SK-N-SH (cell line): ENCODE measurements at regions of chr22 and their contacts with region 1.

Region 1: DNA sequence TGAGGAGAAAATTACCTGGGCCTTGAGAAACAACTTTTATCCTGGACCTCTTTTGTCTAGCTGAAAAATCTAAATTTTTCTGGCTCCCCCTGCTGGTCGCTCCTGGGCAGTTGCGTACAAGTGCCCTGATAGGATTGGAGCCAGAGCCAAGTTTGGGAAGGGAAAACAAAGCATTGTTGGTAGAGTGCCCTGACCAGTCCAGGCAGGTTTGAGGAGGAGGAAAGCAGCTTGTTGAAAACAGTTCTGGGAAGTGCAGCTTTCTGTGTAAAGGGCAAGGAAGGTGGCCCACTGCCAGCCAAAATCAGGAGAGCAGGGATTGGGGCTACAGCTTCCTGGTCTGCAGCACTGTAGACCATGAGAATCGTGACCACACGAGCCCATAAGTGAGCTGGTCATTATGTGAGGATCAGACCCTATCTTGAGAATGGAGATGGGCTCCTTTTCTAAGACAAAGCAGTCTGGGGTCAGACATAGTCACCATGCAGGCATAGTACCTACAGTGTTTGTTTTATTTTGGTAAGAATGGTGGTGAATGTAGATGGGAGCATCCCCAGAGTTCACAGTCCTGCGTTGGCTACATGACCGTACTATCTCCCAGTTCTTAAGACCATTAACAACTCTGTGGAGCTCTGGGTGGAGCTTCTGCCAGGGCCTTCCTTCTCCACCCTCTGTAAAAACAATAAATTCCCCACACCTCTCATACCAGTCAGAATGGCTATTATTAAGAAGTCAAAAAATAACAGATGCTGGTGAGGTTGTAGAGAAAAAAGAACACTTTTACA is 21.3 kb upstream of the PIK3IP1 start:
- DNase-seq: peak; percentile 72
- H3K4me3 ChIP-seq: no peak overlapping the region
- H3K27ac ChIP-seq: 0 out of 4 replicates have a peak overlapping the region, but pooled peaks of 1 of the 2 experiments have one; percentile 8
- H3K4me1 ChIP-seq: peaks cover 0 to 2% of the 10 kb centered on the region in 2 experiments; a peak in 1 of 4 replicates
- H3K27me3 ChIP-seq: no peaks in the 10 kb centered on the region
- CTCF ChIP-seq: peak; percentile 93
- EP300 ChIP-seq: no peak
- RAD21 ChIP-seq: peak; percentile 66

Region 2: GRCh38 chr22:31127181-31127772 is 186.3 kb before region 1 on chr22:
- CTCF ChIA-PET with region 1: no interaction called
- POLR2A ChIA-PET with region 1: no interaction called
- DNase-seq: no peak
- H3K4me3 ChIP-seq: no peak overlapping the region
- H3K27ac ChIP-seq: no peak overlapping the region
- H3K4me1 ChIP-seq: peaks cover 0 to 39% of the 10 kb centered on the region in 2 experiments; a peak in 1 of 4 replicates
- H3K27me3 ChIP-seq: no peaks in the 10 kb centered on the region
- CTCF ChIP-seq: no peak
- EP300 ChIP-seq: no peak
- RAD21 ChIP-seq: no peak

Region 3: DNA sequence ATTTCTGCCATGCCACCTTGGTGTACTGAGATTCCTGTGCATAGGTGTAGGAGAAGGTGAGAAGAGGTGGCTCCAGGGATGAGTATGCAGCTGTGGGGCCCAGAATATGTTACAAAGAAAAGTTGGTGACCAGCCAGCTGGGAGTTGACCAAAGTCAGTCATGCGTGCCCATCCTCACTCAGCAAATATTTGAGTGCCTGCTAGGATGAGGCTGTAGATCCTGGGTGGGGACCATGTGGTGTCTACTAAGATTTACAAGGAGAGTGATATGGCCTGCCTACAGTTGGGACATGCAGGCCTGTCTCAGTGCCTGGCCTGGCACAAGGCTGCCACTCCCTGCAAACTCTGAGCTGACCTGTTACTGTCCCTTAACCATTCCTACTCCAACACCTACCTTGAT is 134.2 kb before region 1 on chr22:
- CTCF ChIA-PET with region 1: no interaction called
- POLR2A ChIA-PET with region 1: no interaction called
- DNase-seq: no peak
- H3K4me3 ChIP-seq: no peak overlapping the region
- H3K27ac ChIP-seq: no peak overlapping the region
- H3K4me1 ChIP-seq: peaks cover 0 to 17% of the 10 kb centered on the region in 2 experiments; a peak in 1 of 4 replicates
- H3K27me3 ChIP-seq: no peaks in the 10 kb centered on the region
- CTCF ChIP-seq: no peak
- EP300 ChIP-seq: no peak
- RAD21 ChIP-seq: no peak

Region 4: GRCh38 chr22:31278622-31279326 is 34.8 kb before region 1 on chr22:
- CTCF ChIA-PET with region 1: interaction called, 14 read pairs
- POLR2A ChIA-PET with region 1: no interaction called
- DNase-seq: no peak
- H3K4me3 ChIP-seq: no peak overlapping the region
- H3K27ac ChIP-seq: no peak overlapping the region
- H3K4me1 ChIP-seq: no peaks in the 10 kb centered on the region; a peak in 1 of 4 replicates
- H3K27me3 ChIP-seq: no peaks in the 10 kb centered on the region
- CTCF ChIP-seq: no peak
- EP300 ChIP-seq: no peak
- RAD21 ChIP-seq: no peak

Region 5: GRCh38 chr22:31290494-31291471 is 22.8 kb before region 1 on chr22:
- CTCF ChIA-PET with region 1: interaction called, 36 read pairs
- POLR2A ChIA-PET with region 1: no interaction called
- DNase-seq: peak; percentile 96
- H3K4me3 ChIP-seq: peak overlapping the region; percentile 69 to 74
- H3K27ac ChIP-seq: peak overlapping the region; percentile 51 to 96
- H3K4me1 ChIP-seq: peaks cover 7 to 21% of the 10 kb centered on the region in 2 experiments; a peak in 3 of 4 replicates
- H3K27me3 ChIP-seq: no peaks in the 10 kb centered on the region
- CTCF ChIP-seq: no peak
- EP300 ChIP-seq: peak; percentile 9 to 73; a peak in 3 of 4 replicates
- RAD21 ChIP-seq: no peak

Region 6: DNA sequence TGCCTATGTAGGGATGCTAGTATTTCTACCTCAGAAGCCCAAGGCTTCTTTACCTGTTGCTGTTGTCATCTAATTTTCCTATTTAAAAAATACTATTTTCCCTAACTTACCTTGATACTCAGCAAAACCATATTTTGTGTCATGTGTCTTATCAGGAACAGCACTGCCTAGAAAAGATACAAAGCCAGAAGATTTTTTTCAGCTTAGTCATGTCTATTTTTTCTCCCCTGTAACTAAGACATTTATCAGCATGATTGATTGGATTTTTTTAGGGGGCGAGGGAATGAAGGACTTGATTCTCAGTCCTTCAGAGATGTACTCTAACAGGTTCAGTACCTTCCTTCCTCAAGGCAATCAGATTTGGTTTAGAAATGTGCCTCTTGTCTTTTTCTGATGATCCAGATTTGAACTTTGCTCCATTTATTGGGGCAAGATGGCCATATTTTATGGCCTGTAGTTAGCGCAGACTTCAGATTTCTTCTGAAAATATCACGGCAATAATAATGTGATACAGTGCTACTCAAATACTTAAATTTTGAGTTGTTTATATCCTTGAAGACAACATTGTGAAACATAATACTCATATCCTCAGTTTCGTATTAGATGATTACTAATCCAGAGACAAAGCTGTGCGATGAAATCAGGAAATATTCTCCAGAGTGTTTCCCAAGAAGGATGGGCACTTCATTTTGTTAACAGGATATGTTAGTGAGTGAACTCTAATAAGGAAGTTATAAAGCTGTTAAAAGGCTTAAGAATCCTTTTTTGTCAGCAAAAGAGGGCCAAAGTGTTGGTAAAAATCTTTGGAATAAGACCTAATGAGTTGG is 17.5 kb before region 1 on chr22:
- CTCF ChIA-PET with region 1: interaction called, 58 read pairs
- POLR2A ChIA-PET with region 1: no interaction called
- DNase-seq: no peak
- H3K4me3 ChIP-seq: no peak overlapping the region
- H3K27ac ChIP-seq: peak overlapping the region; percentile 23 to 45; a peak in 3 of 4 replicates
- H3K4me1 ChIP-seq: peaks cover 6 to 16% of the 10 kb centered on the region in 2 experiments; a peak in 3 of 4 replicates
- H3K27me3 ChIP-seq: no peaks in the 10 kb centered on the region
- CTCF ChIP-seq: no peak
- EP300 ChIP-seq: no peak
- RAD21 ChIP-seq: no peak

Region 7: GRCh38 chr22:31302006-31302405 is 11.6 kb before region 1 on chr22:
- CTCF ChIA-PET with region 1: interaction called, 58 read pairs
- POLR2A ChIA-PET with region 1: no interaction called
- DNase-seq: no peak
- H3K4me3 ChIP-seq: no peak overlapping the region
- H3K27ac ChIP-seq: no peak overlapping the region
- H3K4me1 ChIP-seq: no peaks in the 10 kb centered on the region; a peak in 1 of 4 replicates
- H3K27me3 ChIP-seq: no peaks in the 10 kb centered on the region
- CTCF ChIP-seq: no peak
- EP300 ChIP-seq: no peak
- RAD21 ChIP-seq: no peak

Region 8: DNA sequence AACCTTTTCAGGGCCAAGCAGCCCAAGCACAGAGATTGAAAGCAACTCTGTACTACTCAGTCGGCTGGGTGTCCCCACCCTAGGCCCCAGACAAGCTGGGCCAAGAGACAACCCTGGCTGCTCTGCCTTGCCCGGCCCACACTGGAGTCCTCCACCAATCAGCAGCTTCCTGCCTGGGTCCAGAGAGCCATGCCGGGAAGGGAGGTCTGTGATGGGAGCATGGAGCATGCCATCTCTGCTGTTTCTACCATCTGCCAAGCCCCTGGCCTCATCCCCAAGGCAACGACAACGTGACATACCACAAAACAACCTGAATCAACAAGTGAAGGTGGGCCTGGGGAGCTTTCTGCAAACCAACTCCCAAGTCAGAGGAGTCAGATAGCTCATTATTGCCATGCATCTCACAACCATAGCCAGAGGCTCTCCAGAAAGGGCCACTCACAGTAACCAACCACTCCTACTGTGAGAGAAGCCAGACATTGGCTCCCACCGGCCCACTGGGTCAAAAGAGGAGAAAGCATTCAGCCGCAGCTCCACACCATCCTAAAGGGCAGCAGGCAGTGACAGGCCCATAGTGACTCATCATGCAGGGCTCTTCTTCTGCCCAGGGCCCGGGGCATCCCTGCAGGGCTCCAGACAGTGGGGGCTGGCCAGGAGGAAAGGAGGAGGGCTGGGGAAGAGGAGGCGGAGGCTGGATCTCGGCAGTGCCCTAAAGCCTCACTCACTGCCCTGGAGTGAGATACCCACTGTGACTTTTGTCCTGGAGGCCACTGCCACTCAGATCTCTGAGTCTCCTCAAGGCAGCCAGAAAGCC is 14.5 kb after region 1 on chr22:
- CTCF ChIA-PET with region 1: interaction called, 37 read pairs
- POLR2A ChIA-PET with region 1: no interaction called
- DNase-seq: no peak
- H3K4me3 ChIP-seq: no peak overlapping the region
- H3K27ac ChIP-seq: no peak overlapping the region
- H3K4me1 ChIP-seq: no peaks in the 10 kb centered on the region
- H3K27me3 ChIP-seq: no peaks in the 10 kb centered on the region
- CTCF ChIP-seq: no peak
- EP300 ChIP-seq: no peak
- RAD21 ChIP-seq: no peak

Region 9: GRCh38 chr22:31337161-31337560 is 23.6 kb after region 1 on chr22:
- CTCF ChIA-PET with region 1: interaction called, 25 read pairs
- POLR2A ChIA-PET with region 1: interaction called, 3 read pairs
- DNase-seq: no peak
- H3K4me3 ChIP-seq: no peak overlapping the region
- H3K27ac ChIP-seq: no peak overlapping the region
- H3K4me1 ChIP-seq: peaks cover 0 to 29% of the 10 kb centered on the region in 2 experiments; a peak in 1 of 4 replicates
- H3K27me3 ChIP-seq: no peaks in the 10 kb centered on the region
- CTCF ChIP-seq: no peak
- EP300 ChIP-seq: no peak
- RAD21 ChIP-seq: no peak